ENCODE measurements at regions of chr18 and their contacts with region 1.

Region 1: DNA sequence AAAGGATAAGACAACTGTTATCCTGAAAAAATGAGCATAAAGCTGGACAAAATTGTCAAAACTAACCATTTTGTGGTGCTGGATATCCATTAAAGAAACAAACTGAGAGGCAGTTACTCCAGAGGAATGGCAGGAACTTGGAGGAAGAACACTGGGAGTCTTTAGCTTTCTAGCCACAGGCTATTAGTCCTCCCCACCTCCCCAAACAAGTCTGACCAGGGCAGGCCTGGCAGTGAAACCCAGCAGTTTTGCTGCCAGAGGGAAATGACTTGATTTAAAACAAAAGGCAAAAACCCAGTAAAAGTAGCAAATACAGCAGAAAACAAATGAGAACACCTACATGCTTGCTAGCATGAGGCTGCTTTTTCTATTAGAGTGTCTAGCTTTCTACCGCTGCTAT is 34.9 kb downstream of the OSBPL1A start:
- DNase-seq: no peak
- ATAC-seq: no peak
- H3K4me3 Mint-ChIP-seq: no peak overlapping the region
- H3K27ac Mint-ChIP-seq: no peak overlapping the region
- H3K4me1 Mint-ChIP-seq: peaks cover 3% of the 10 kb centered on the region
- H3K27me3 Mint-ChIP-seq: no peaks in the 10 kb centered on the region

Region 2: DNA sequence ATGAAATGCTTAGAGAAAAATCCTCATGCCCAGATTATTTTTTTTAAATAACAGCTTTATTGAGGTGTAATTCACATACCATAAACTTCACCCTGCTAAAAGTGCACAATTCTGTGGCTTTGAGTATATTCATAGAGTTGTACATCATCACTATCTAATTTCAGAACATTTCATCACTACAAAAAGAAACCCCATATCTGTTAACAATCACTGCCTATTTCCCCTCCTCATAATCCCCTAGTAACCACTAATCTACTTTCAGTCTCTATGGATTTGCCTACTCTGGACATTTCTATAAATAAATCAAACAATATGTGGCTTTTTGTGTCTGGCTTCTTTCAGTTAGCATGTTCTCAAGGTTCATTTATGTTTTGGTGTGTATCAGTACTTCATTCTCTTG is 16.5 kb before region 1 on chr18:
- CTCF ChIA-PET with region 1: interaction called, 10 read pairs
- POLR2A ChIA-PET with region 1: no interaction called
- intact Hi-C with region 1: no loop called
- DNase-seq: no peak
- ATAC-seq: no peak
- H3K4me3 Mint-ChIP-seq: no peak overlapping the region
- H3K27ac Mint-ChIP-seq: no peak overlapping the region
- H3K4me1 Mint-ChIP-seq: no peaks in the 10 kb centered on the region
- H3K27me3 Mint-ChIP-seq: no peaks in the 10 kb centered on the region

Region 3: GRCh38 chr18:24413148-24413547 is 50.4 kb after region 1 on chr18:
- CTCF ChIA-PET with region 1: interaction called, 19 read pairs
- POLR2A ChIA-PET with region 1: no interaction called
- intact Hi-C with region 1: no loop called
- DNase-seq: no peak
- ATAC-seq: no peak
- H3K4me3 Mint-ChIP-seq: no peak overlapping the region
- H3K27ac Mint-ChIP-seq: no peak overlapping the region
- H3K4me1 Mint-ChIP-seq: peaks cover 28% of the 10 kb centered on the region
- H3K27me3 Mint-ChIP-seq: peaks cover 31% of the 10 kb centered on the region

Region 4: DNA sequence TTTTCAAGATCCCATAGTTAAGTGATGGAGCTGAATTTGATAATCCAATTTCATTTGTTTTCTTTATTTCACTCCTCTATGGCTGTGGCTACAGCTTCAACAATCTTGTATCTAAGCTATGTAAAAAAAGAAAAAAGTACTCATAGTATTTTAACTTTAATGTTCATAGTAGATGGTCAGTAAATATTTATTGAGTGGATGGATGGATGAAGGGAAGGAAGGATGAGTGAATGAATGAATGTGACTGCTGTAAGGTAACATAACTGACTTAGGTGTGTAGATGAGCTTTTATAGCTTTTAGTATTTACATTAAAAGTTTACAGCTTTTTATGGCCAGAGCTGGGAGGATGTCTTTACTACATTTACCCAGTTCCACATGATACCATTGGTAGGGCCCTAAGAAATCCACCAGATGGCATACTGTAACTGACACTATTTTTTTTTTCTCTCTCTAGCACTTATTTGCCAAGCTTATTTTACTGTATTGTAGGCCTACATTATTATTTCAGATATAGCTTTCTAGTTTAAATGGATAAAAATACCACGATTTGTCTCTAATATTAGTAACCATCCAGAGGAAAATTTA is 84.3 kb after region 1 on chr18:
- CTCF ChIA-PET with region 1: interaction called, 10 read pairs
- POLR2A ChIA-PET with region 1: no interaction called
- intact Hi-C with region 1: no loop called
- DNase-seq: no peak
- ATAC-seq: no peak
- H3K4me3 Mint-ChIP-seq: no peak overlapping the region
- H3K27ac Mint-ChIP-seq: no peak overlapping the region
- H3K4me1 Mint-ChIP-seq: peaks cover 8% of the 10 kb centered on the region
- H3K27me3 Mint-ChIP-seq: no peaks in the 10 kb centered on the region

Measured in activated CD4-positive, alpha-beta T cell treated with anti-CD3 and anti-CD28 coated beads for 36 hours (primary cell).